SK-N-SH (cell line): ENCODE measurements at regions of chr9 and their contacts with region 1.

Region 1: DNA sequence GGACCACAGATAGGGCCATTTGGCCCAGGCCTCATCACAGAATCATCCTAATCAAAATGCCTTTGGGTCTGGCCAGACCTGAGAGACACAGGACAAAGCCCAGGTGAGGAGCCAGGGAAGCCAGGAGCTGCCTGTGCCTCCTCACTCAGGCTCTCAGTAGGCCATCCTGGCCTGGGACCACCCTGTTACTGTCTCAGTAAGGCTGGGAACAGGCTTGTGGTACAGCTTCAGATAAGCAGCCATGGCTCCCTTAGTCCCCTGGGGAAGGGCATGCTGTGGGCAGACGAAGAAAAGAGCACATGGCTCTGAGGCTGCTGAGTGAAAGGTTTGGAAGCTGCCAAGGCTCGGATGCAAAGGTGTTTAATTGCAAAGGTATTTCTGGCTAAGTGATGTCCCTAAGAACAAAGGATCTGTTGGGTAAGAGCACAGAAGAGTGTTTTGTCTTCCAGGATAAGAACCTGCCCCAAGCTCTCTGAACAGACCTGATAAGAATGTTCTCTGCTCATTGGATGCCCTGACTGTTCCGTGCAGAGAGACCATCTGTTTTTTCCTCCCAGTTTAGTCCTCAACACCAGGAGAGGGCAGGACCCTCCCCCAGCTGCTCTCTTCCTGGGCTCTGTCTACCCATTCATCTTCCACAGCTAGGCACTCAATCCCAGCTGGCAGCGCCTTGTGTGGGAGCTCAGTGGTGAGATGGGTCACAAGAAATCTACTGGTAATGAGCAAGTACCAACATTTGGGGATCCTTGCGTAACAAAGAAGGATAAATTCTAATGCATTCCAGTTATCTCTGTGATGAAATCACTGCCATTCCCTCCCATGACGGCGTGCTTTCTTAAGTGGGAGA is 17.7 kb downstream of the ANGPTL2 start:
- DNase-seq: peak; percentile 45
- H3K4me3 ChIP-seq: no peak overlapping the region
- H3K27ac ChIP-seq: peak overlapping the region in 1 of 2 experiments; percentile 56; a peak in 2 of 4 replicates
- H3K4me1 ChIP-seq: peaks cover 0 to 32% of the 10 kb centered on the region in 2 experiments; a peak in 2 of 4 replicates
- H3K27me3 ChIP-seq: no peaks in the 10 kb centered on the region
- CTCF ChIP-seq: no peak
- EP300 ChIP-seq: no peak
- RAD21 ChIP-seq: no peak

Region 2: DNA sequence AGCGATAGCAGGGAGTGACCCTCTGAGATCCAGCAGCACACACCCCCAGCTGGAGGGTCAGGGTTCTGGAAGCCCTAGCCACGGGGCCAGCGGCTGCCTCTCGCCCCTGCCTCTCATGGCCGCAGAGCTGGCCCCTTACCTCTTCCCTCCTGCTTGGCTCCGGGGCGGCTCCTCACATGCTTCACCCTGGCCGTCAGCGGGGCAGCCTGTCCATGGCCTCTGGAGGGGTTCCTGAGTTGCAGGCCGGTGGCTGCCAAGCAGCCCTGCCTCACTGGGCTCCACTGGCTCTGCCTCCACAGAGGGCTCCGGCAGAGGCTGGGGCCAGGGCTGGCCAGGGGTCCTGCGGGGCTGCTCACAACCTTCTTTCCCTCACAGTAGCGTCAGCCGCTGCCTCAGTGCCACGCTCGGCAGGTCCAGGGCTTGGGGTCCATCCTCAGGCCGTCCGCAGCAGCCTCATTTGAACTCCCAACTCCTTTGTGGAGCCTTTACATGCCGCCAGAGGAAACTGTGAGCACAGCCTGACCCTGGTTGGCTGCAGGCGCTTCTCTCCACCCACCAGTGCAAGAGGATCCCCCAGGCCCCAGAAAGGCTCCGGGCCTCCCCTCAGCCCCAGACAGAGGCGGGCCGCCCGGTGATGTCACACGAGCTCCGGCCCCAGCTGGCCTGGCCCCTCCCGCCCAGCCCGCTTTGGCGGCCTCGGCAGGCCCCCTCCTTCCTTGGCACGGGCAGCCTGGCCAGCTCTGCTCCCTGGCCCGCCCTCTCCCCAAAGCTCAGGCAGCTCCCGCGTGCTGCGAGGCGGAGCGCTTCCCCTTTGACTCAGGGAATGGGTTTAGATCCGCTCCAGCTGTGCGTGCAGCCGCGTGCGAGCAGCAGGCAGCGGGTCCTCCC is 17.7 kb after region 1 on chr9 and contains the start of gene ANGPTL2:
- CTCF ChIA-PET with region 1: interaction called, 4 read pairs
- POLR2A ChIA-PET with region 1: interaction called, 10 read pairs
- DNase-seq: peak; percentile 94
- H3K4me3 ChIP-seq: peak within 1 kb of the TSS; percentile 60 to 68
- H3K27ac ChIP-seq: peak within 1 kb of the TSS; percentile 69 to 75
- H3K4me1 ChIP-seq: peaks cover 12 to 35% of the 10 kb centered on the region in 2 experiments; a peak in 1 of 4 replicates
- H3K27me3 ChIP-seq: no peaks in the 10 kb centered on the region
- CTCF ChIP-seq: no peak
- EP300 ChIP-seq: no peak
- RAD21 ChIP-seq: no peak; the same call in 1 of the 2 replicates
- polyA plus RNA-seq, gene ANGPTL2: 11.0 and 12.3 TPM in 2 replicates